Left colon (tissue), 2 donors: ENCODE measurements at regions of chr7 and their contacts with region 1.

Region 1: GRCh38 chr7:78794101-78794500 is 659.4 kb downstream of the MAGI2 start:
- DNase-seq: no peak
- ATAC-seq: no peak

Region 2: GRCh38 chr7:78835896-78836295 is 41.8 kb after region 1 on chr7:
- intact Hi-C with region 1: loop called in 1 of 2 experiments (anchors 5 kb)
- DNase-seq: no peak
- ATAC-seq: no peak